Calu3 (cell line): ENCODE measurements at regions of chr12 and their contacts with region 1.

Region 1: GRCh38 chr12:31325877-31326631 is at the start of gene SINHCAF:
- DNase-seq: peak; percentile 98
- H3K4me3 Mint-ChIP-seq: peak within 1 kb of the TSS; percentile 84
- H3K27ac Mint-ChIP-seq: peak within 1 kb of the TSS; percentile 82
- H3K4me1 Mint-ChIP-seq: no peaks in the 10 kb centered on the region
- H3K27me3 Mint-ChIP-seq: no peaks in the 10 kb centered on the region
- CTCF ChIP-seq: no peak
- total RNA-seq, gene SINHCAF: 121 and 127 TPM in 2 replicates

Region 2: DNA sequence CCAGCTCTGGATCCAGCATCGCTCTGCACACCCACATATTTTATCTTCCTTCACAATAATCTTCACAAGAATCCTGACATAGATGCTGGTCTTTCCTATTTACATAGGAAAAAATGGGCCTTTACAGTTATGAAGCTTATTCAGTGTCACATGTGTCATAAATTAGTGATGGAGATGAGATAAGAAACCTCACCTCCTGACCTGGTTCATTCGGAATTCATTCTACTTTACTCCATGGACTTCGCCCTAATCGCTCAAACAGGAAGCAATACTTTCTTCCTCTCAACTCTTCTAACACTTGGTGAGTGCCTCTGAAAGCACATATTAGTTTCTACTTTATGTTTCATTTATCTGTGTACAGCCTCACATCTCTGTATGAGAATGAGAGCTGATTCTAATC is 11.9 kb after region 1 on chr12:
- CTCF ChIA-PET with region 1: interaction called, 11 read pairs
- intact Hi-C with region 1: no loop called
- DNase-seq: no peak
- H3K4me3 Mint-ChIP-seq: no peak overlapping the region
- H3K27ac Mint-ChIP-seq: peak overlapping the region; percentile 1
- H3K4me1 Mint-ChIP-seq: peaks cover 21% of the 10 kb centered on the region
- H3K27me3 Mint-ChIP-seq: no peaks in the 10 kb centered on the region
- CTCF ChIP-seq: no peak

Region 3: DNA sequence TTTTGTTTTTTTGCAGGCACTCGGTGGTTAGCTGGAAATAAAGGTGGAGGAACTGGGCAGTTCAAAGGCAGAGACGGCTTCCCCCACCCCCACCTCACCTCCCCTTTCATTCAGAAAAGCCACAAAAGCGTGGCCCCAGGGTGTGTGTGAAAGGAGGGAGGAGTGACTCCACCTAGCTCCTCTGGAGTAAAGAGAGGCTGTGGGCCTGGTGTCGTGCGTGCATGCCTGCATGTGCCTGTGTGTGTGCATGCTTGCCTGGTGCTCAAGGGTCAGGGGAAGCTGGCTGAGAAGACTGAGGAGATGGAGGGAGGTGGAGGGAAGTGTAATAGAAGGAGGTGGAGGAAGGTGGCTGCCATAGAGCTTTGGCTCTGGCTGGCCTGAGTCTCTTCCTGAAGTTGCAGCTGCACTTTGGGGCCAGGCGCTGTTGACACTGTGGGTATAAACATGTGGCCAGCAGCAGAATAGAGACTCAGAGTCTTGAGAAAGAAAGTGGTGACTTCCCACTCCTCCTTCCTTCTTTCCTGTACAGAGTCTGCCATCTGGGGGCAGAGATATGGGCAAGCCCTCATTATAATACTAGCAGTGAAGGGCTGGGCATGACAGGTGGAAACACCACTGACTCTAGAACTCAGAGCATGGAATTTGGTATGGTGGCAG is 36.8 kb after region 1 on chr12:
- CTCF ChIA-PET with region 1: interaction called, 9 read pairs
- intact Hi-C with region 1: loop called (anchors 2 kb)
- DNase-seq: peak; percentile 40
- H3K4me3 Mint-ChIP-seq: peak overlapping the region; percentile 64
- H3K27ac Mint-ChIP-seq: peak overlapping the region; percentile 82
- H3K4me1 Mint-ChIP-seq: peaks cover 17% of the 10 kb centered on the region
- H3K27me3 Mint-ChIP-seq: no peaks in the 10 kb centered on the region
- CTCF ChIP-seq: no peak